Calu3 (cell line): ENCODE measurements at regions of chr2 and their contacts with region 1.

Region 1: GRCh38 chr2:191165176-191165643 is 14.4 kb upstream of the STAT4 start:
- DNase-seq: no peak
- H3K4me3 Mint-ChIP-seq: no peak overlapping the region
- H3K27ac Mint-ChIP-seq: no peak overlapping the region
- H3K4me1 Mint-ChIP-seq: peaks cover 42% of the 10 kb centered on the region
- H3K27me3 Mint-ChIP-seq: peaks cover 13% of the 10 kb centered on the region
- CTCF ChIP-seq: peak; percentile 60

Region 2: GRCh38 chr2:191187105-191187829 is 22.1 kb after region 1 on chr2:
- CTCF ChIA-PET with region 1: no interaction called
- intact Hi-C with region 1: no loop called
- DNase-seq: no peak
- H3K4me3 Mint-ChIP-seq: no peak overlapping the region
- H3K27ac Mint-ChIP-seq: no peak overlapping the region
- H3K4me1 Mint-ChIP-seq: no peaks in the 10 kb centered on the region
- H3K27me3 Mint-ChIP-seq: no peaks in the 10 kb centered on the region
- CTCF ChIP-seq: no peak

Region 3: GRCh38 chr2:191231995-191232394 is 66.8 kb after region 1 on chr2:
- CTCF ChIA-PET with region 1: no interaction called
- intact Hi-C with region 1: loop called (anchors 5 kb)
- DNase-seq: no peak
- H3K4me3 Mint-ChIP-seq: no peak overlapping the region
- H3K27ac Mint-ChIP-seq: no peak overlapping the region
- H3K4me1 Mint-ChIP-seq: peaks cover 15% of the 10 kb centered on the region
- H3K27me3 Mint-ChIP-seq: no peaks in the 10 kb centered on the region
- CTCF ChIP-seq: peak; percentile 41

Region 4: DNA sequence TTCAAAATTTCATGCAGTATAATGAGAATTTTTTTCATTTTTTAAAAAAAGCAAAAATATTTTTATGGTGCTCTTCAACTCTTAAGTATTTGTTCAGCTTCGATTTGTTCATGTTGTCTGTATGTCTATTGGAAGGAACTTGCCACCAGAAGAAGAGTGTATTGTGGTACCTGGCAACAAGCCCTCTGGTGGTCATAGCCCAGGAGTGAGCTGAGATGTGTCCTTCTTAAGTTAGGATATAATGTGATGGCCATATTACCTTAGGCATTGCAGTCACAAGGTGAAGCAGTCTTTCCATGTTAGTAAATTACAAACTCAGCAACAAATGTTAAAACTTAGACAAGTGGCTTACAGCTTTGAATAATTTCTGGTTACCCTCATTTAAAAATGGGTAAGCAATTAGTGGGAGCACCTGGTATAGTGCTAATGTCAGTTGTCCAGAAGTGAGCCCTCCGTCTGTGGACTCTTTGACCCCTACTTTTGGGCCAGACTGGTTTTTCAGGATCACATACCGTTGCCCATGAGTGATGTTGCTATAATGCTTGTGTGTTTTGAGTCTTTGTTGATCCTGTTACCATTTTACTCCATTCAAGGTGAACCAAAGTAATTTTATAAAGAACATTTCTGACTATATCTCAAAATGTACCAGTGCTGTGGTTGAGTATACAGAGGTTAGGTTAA is 137.4 kb after region 1 on chr2:
- CTCF ChIA-PET with region 1: interaction called, 3 read pairs
- intact Hi-C with region 1: loop called (anchors 5 kb)
- DNase-seq: peak; percentile 46
- H3K4me3 Mint-ChIP-seq: no peak overlapping the region
- H3K27ac Mint-ChIP-seq: no peak overlapping the region
- H3K4me1 Mint-ChIP-seq: peaks cover 36% of the 10 kb centered on the region
- H3K27me3 Mint-ChIP-seq: no peaks in the 10 kb centered on the region
- CTCF ChIP-seq: peak; percentile 36

Region 5: DNA sequence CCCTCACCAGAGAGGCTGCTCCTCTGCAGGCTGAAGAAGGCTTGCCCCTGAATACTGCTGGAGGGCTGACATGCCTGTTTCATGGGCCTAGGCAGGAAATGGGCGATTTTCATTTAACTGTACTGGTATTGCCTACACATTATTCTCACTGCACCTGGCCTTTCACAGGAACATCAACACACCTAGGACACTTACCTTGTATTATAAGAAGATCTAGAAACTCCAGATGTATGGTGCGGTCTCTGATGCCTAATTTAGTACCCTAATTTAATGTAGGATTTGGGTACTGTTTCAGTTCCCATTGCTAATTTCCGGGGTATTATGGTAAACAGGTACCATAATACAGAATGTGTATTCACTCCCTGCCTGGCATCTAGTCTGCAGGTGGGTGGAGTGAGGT is 226.0 kb after region 1 on chr2:
- CTCF ChIA-PET with region 1: no interaction called
- intact Hi-C with region 1: loop called (anchors 5 kb)
- DNase-seq: no peak
- H3K4me3 Mint-ChIP-seq: no peak overlapping the region
- H3K27ac Mint-ChIP-seq: no peak overlapping the region
- H3K4me1 Mint-ChIP-seq: peaks cover 8% of the 10 kb centered on the region
- H3K27me3 Mint-ChIP-seq: no peaks in the 10 kb centered on the region
- CTCF ChIP-seq: no peak

Region 6: GRCh38 chr2:191501561-191502168 is 336.5 kb after region 1 on chr2:
- CTCF ChIA-PET with region 1: interaction called, 10 read pairs
- intact Hi-C with region 1: loop called (anchors 1 kb)
- DNase-seq: no peak
- H3K4me3 Mint-ChIP-seq: no peak overlapping the region
- H3K27ac Mint-ChIP-seq: no peak overlapping the region
- H3K4me1 Mint-ChIP-seq: peaks cover 2% of the 10 kb centered on the region
- H3K27me3 Mint-ChIP-seq: no peaks in the 10 kb centered on the region
- CTCF ChIP-seq: peak; percentile 41